CD4-positive, alpha-beta T cell (primary cell): ENCODE measurements at regions of chr7 and their contacts with region 1.

Region 1: DNA sequence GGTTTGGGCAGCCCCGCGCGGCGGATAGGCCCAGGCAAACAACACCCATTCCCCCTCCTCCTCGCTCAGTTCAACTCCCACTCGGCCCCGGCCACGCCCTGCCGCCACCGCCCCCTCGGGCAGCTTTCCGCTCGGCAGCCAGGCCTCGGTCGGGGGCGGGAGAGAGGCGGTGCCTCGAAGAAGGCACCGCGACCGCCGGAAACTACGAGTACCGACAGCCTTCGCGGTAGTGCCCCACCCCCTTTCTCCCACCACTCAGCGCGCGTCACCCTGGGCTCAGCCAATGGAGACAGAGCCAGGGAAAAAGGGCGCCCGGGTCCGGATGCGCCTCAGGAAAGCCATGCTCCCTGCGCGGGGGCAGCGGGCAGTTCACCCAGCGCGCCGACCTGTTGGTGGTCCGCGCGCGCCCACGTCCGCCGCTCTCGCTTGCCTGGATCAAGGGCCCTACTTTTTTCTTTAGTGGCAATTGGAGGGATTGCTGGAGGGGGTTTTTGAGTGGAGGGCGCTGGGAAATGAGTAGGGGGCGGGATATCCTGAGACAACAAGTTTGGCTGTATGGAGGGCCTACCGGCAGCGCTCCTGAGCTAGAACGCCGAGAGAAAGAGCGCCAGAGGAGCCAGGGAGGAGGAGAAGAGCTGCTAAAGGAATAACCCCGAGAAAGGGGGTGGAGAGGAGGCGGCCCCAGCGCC is 557 bp upstream of the SP4 start:
- DNase-seq: peak; percentile 98 to 100 (median 99)
- ATAC-seq: peak; percentile 74
- H3K4me3 ChIP-seq: peak overlapping the region; percentile 93
- H3K4me3 Mint-ChIP-seq: peak overlapping the region; percentile 100
- H3K27ac ChIP-seq: peak overlapping the region; percentile 97
- H3K27ac Mint-ChIP-seq: peak overlapping the region; percentile 99
- H3K4me1 ChIP-seq: peaks cover 29% of the 10 kb centered on the region
- H3K4me1 Mint-ChIP-seq: peaks cover 47% of the 10 kb centered on the region
- H3K27me3 ChIP-seq: no peaks in the 10 kb centered on the region
- H3K27me3 Mint-ChIP-seq: no peaks in the 10 kb centered on the region
- CTCF ChIP-seq: no peak

Region 2: DNA sequence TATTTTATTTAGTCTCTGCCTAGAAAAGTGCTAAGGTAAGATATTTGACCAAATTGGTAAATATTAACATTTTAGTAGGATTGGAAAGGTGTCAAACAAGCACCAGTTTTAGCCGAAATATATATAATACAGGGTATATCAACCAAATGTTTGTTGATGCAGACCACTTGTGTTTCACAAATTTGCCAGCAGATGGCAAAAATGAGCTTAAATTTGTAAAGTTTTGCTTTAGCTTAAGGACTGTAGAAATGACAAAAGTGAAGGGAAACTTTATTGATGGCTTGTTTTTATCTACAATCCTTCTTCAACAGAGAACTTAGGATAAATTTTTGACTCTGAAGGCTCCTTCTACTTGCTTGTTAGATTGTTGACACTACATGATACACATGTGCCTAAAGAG is 1713.7 kb before region 1 on chr7:
- CTCF ChIA-PET with region 1: no interaction called
- POLR2A ChIA-PET with region 1: interaction called, 5 read pairs
- intact Hi-C with region 1: loop called in 1 of 2 experiments (anchors 10 kb)
- DNase-seq: peak in 13 of 14 experiments; percentile 3 to 74 (median 29)
- ATAC-seq: no peak
- H3K4me3 ChIP-seq: no peak overlapping the region
- H3K4me3 Mint-ChIP-seq: no peak overlapping the region
- H3K27ac ChIP-seq: no peak overlapping the region
- H3K27ac Mint-ChIP-seq: no peak overlapping the region
- H3K4me1 ChIP-seq: peaks cover 7% of the 10 kb centered on the region
- H3K4me1 Mint-ChIP-seq: peaks cover 17% of the 10 kb centered on the region
- H3K27me3 ChIP-seq: no peaks in the 10 kb centered on the region
- H3K27me3 Mint-ChIP-seq: no peaks in the 10 kb centered on the region
- CTCF ChIP-seq: peak; percentile 44

Region 3: GRCh38 chr7:21352540-21353387 is 74.6 kb before region 1 on chr7:
- CTCF ChIA-PET with region 1: no interaction called
- POLR2A ChIA-PET with region 1: interaction called, 29 read pairs
- intact Hi-C with region 1: loop called (anchors 5 kb)
- DNase-seq: peak in 3 of 14 experiments; percentile 66 to 80 (median 66)
- ATAC-seq: peak; percentile 67
- H3K4me3 ChIP-seq: peak overlapping the region; percentile 29
- H3K4me3 Mint-ChIP-seq: peak overlapping the region; percentile 75
- H3K27ac ChIP-seq: peak overlapping the region; percentile 18 to 68
- H3K27ac Mint-ChIP-seq: peak overlapping the region; percentile 75
- H3K4me1 ChIP-seq: peaks cover 41% of the 10 kb centered on the region
- H3K4me1 Mint-ChIP-seq: peaks cover 54% of the 10 kb centered on the region
- H3K27me3 ChIP-seq: no peaks in the 10 kb centered on the region
- H3K27me3 Mint-ChIP-seq: no peaks in the 10 kb centered on the region
- CTCF ChIP-seq: no peak

Region 4: GRCh38 chr7:21412410-21412851 is 14.9 kb before region 1 on chr7:
- CTCF ChIA-PET with region 1: no interaction called
- POLR2A ChIA-PET with region 1: interaction called, 34 read pairs
- intact Hi-C with region 1: no loop called
- DNase-seq: peak in 3 of 14 experiments; percentile 15 to 66 (median 24)
- ATAC-seq: peak; percentile 60
- H3K4me3 ChIP-seq: no peak overlapping the region
- H3K4me3 Mint-ChIP-seq: no peak overlapping the region
- H3K27ac ChIP-seq: peak overlapping the region in 1 of 2 donors; percentile 25
- H3K27ac Mint-ChIP-seq: no peak overlapping the region
- H3K4me1 ChIP-seq: peaks cover 19% of the 10 kb centered on the region
- H3K4me1 Mint-ChIP-seq: peaks cover 32% of the 10 kb centered on the region
- H3K27me3 ChIP-seq: no peaks in the 10 kb centered on the region
- H3K27me3 Mint-ChIP-seq: no peaks in the 10 kb centered on the region
- CTCF ChIP-seq: no peak

Region 5: DNA sequence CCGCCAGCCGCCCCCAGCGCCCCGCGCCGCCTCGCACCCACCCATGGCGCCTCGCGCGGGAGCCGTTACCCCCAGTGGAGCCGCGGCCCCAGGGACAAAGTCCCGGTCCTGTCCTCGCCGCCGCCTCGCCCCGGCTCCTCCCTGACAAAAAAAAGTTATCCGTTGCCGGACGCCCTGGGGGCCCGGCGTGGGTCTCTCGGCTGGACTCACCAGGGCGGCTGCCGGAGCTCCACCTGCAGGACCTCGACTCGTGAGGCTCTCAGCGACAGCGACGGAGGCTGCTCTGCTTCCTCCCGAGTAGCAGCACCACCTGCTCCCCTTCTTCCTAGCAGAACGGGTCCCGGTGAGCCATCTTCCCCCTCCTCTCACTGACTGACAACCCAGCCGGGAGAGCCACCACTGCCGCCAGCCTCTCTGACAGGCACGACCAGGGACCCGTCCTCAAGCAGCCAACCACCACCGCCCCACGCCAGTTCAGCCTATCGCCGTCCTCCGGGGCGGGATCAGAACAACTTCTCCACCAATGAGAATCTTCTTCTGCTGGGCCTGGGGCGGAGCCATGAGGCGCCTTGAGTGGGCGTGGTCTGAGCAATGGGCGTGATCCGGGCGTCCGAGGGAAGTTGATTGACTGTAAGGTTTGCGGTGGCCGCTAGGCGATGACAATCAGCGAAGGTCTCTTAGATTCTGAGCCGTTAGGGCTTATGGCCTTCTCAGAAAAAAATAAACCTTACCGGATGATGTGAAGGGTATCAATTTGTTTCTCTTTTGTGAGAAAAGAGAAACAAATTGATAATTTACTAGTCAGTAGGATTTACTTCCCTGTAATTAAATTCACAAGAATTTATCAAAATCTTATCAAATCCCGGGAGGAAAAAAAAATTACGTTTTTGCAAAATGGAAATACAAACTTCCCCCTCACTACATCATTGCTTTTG is 1586.7 kb after region 1 on chr7 and contains the start of gene HYCC1:
- CTCF ChIA-PET with region 1: no interaction called
- POLR2A ChIA-PET with region 1: no interaction called
- intact Hi-C with region 1: loop called in 1 of 2 experiments (anchors 10 kb)
- DNase-seq: peak; percentile 97 to 99 (median 98)
- ATAC-seq: peak; percentile 96
- H3K4me3 ChIP-seq: peak within 1 kb of the TSS; percentile 87
- H3K4me3 Mint-ChIP-seq: peak within 1 kb of the TSS; percentile 99
- H3K27ac ChIP-seq: peak within 1 kb of the TSS; percentile 31 to 44
- H3K27ac Mint-ChIP-seq: peak within 1 kb of the TSS; percentile 83
- H3K4me1 ChIP-seq: peaks cover 19% of the 10 kb centered on the region
- H3K4me1 Mint-ChIP-seq: peaks cover 24% of the 10 kb centered on the region
- H3K27me3 ChIP-seq: no peaks in the 10 kb centered on the region
- H3K27me3 Mint-ChIP-seq: no peaks in the 10 kb centered on the region
- CTCF ChIP-seq: peak; percentile 65
- total RNA-seq, gene HYCC1: 12.4 to 13.1 TPM

Region 6: GRCh38 chr7:23181684-23182553 is 1754.6 kb after region 1 on chr7 and contains the start of gene NUP42:
- CTCF ChIA-PET with region 1: no interaction called
- POLR2A ChIA-PET with region 1: no interaction called
- intact Hi-C with region 1: loop called in 1 of 2 experiments (anchors 5 kb)
- DNase-seq: peak; percentile 87 to 98 (median 92)
- ATAC-seq: peak; percentile 91
- H3K4me3 ChIP-seq: peak within 1 kb of the TSS; percentile 88
- H3K4me3 Mint-ChIP-seq: peak within 1 kb of the TSS; percentile 96
- H3K27ac ChIP-seq: peak within 1 kb of the TSS; percentile 71 to 81
- H3K27ac Mint-ChIP-seq: peak within 1 kb of the TSS; percentile 97
- H3K4me1 ChIP-seq: peaks cover 18% of the 10 kb centered on the region
- H3K4me1 Mint-ChIP-seq: peaks cover 29% of the 10 kb centered on the region
- H3K27me3 ChIP-seq: no peaks in the 10 kb centered on the region
- H3K27me3 Mint-ChIP-seq: no peaks in the 10 kb centered on the region
- CTCF ChIP-seq: no peak
- total RNA-seq, gene NUP42: 19.4 to 20.1 TPM